ENCODE measurements at regions of chr18 and their contacts with region 1.

Region 1: DNA sequence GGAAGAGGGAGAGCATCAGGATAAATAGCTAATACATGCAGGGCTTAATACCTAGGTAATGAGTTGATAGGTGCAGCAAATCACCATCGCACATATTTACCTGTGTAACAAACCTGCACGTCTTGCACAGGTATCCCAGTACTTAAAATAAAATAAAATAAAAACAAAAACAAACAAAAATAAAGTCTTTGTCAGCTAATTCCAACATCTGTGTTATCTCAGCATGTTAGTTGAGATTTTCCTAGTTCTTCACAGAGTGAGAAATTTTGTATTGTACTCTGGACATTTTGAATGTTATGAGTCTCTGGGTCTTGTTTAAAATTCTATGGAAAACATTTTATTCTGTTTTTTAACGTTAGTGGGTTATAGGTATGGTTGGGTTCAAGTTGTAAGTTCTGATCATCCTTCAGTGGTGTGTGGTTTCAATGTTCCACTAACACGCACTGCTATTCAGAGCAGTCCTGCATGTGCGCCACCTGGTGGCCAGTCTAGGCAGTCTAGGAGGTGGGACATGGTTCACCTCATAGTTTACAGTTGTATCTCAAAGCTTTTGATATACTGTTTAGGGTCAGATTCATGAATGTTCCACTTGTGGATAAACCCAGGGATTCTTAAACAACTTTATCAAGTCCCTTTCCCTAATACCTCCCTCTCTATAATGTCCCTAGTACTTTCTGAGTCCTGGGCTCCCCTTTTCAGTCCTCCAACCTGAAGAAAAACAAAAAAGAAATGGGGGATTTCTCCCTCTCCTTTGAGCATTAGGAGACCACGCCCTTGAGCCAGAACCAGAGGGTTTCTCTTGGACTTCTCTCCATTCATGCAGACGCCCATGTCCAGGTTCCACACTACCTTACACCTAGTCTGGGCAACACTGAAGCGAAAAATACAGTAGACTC is 213.4 kb upstream of the GATA6 start:
- DNase-seq: peak; percentile 59
- H3K4me3 ChIP-seq: peak overlapping the region in 1 of 2 experiments; percentile 26; a peak in 1 of 4 replicates
- H3K27ac ChIP-seq: no peak overlapping the region
- H3K4me1 ChIP-seq: no peaks in the 10 kb centered on the region
- H3K27me3 ChIP-seq: peaks cover 41% of the 10 kb centered on the region
- CTCF ChIP-seq: peak; percentile 96
- EP300 ChIP-seq: no peak
- RAD21 ChIP-seq: peak; percentile 74

Region 2: DNA sequence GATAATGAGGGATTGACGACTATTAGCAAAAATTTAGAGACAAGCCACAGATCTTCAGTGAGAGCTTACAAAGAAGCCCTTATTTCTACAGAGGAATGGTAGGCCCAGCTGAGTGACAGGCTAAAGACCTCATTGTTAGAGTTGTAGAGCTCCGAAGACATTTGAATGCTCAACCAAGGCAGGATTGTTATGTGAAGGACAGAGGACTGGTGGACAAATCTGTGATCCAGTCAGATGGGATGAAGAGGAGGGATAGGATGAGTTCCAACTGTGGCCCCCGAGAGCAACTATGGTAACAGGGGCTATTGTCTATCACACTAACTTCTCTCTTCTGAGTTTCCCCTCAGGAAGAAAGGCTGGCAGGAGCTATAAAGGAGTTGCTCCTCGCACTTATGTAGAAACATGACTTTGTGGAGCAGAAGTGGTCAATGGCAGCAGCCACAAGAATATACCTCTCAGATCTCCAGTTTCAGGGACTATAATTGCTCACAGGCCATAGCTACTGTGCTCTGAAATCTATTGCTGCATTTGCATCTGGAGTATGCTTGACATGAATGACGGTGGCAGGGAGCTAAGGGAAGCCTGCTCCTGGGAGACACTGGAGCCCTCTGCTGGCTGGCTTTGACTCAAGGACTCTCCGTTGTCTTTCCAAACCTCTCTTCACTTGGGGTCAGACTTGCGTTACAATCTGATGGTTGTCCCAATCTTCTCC is 764.3 kb before region 1 on chr18:
- CTCF ChIA-PET with region 1: interaction called, 16 read pairs
- POLR2A ChIA-PET with region 1: no interaction called
- DNase-seq: peak; percentile 27
- H3K4me3 ChIP-seq: no peak overlapping the region; a peak in 1 of 4 replicates
- H3K27ac ChIP-seq: no peak overlapping the region
- H3K4me1 ChIP-seq: no peaks in the 10 kb centered on the region
- H3K27me3 ChIP-seq: peaks cover 17% of the 10 kb centered on the region; the same call in 1 of the 2 replicates
- CTCF ChIP-seq: peak; percentile 71
- EP300 ChIP-seq: no peak
- RAD21 ChIP-seq: peak; percentile 58

Region 3: DNA sequence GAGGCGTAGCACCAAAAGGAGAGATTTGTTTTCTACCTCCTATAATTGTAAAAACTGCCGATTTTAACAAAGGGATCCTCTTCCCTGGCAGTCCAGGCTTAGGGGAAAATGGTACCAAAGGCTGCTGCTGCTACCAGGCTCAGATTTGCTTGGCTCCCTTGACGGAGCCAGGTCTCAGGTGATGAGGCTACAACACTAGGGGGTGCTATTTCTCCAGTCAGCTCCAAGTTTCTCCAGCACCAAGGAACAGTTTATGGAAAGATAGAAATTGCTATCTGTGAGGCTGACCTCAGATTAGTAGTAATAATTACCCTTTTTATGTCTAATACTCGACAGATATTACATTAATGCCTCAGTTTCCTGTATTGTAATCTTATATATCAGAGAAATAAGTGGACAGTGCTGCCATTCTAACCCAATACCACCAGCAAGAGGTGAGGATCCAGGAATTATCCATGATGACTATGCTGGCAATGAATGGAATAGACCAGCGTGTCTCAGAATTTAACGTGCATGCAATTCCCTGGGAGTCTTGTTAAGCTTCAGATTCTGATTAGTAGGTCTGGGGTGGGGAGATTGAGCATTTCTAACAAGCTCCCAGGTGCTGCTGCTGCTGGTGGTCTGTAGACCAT is 466.8 kb before region 1 on chr18:
- CTCF ChIA-PET with region 1: interaction called, 12 read pairs
- POLR2A ChIA-PET with region 1: no interaction called
- DNase-seq: peak; percentile 71
- H3K4me3 ChIP-seq: peak overlapping the region in 1 of 2 experiments; percentile 49; a peak in 1 of 4 replicates
- H3K27ac ChIP-seq: no peak overlapping the region
- H3K4me1 ChIP-seq: peaks cover 3 to 9% of the 10 kb centered on the region in 2 experiments; a peak in 2 of 4 replicates
- H3K27me3 ChIP-seq: no peaks in the 10 kb centered on the region
- CTCF ChIP-seq: peak; percentile 73
- EP300 ChIP-seq: no peak
- RAD21 ChIP-seq: peak; percentile 83

Region 4: GRCh38 chr18:21897811-21898210 is 58.2 kb before region 1 on chr18:
- CTCF ChIA-PET with region 1: interaction called, 11 read pairs
- POLR2A ChIA-PET with region 1: no interaction called
- DNase-seq: peak; percentile 72
- H3K4me3 ChIP-seq: no peak overlapping the region
- H3K27ac ChIP-seq: no peak overlapping the region
- H3K4me1 ChIP-seq: no peaks in the 10 kb centered on the region
- H3K27me3 ChIP-seq: peaks cover 5% of the 10 kb centered on the region; the same call in 1 of the 2 replicates
- CTCF ChIP-seq: peak; percentile 72
- EP300 ChIP-seq: no peak
- RAD21 ChIP-seq: peak; percentile 79

Region 5: DNA sequence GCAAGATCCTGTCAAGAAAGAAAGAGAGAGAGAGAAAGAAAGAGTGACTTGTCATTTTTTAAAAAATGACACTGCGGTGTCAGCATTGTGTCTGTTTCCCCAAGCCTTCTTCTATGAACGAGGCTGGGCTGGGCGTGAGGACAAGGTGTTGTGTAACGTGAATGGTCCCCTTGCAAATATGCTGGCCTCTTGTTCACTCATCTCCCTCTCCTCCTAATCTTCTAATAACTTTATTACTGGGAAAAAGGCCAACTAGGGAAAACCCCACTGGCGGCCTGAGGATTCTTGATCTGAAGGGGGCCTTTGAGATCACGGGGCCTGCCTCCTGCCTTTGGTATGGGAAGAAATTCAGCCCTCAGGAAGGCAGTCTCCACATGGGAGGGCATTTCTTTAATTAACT is 52.3 kb before region 1 on chr18:
- CTCF ChIA-PET with region 1: interaction called, 12 read pairs
- POLR2A ChIA-PET with region 1: no interaction called
- DNase-seq: no peak
- H3K4me3 ChIP-seq: no peak overlapping the region
- H3K27ac ChIP-seq: no peak overlapping the region
- H3K4me1 ChIP-seq: peaks cover 0 to 4% of the 10 kb centered on the region in 2 experiments; a peak in 1 of 4 replicates
- H3K27me3 ChIP-seq: peaks cover 18% of the 10 kb centered on the region
- CTCF ChIP-seq: no peak
- EP300 ChIP-seq: no peak
- RAD21 ChIP-seq: no peak

Region 6: DNA sequence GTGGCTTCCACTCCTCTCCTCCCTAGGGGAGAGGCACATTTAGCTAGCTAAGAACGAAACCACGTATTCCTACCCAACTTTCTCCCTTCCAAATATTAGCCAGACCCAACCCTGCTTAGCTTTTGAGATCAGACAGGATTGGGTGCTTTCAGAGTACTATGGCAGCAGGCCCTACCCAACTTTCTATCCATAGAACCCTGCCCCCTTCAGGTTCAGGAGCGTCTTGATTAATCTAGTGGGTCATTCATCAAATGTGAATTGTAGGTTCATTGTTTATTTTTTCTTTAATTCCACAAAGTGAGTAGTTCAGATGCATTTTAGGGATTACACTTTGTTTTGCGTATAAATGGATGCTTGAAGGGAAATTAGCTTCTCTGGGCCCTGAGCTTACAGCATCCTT is 27.1 kb before region 1 on chr18:
- CTCF ChIA-PET with region 1: interaction called, 21 read pairs
- POLR2A ChIA-PET with region 1: no interaction called
- DNase-seq: no peak
- H3K4me3 ChIP-seq: no peak overlapping the region
- H3K27ac ChIP-seq: no peak overlapping the region
- H3K4me1 ChIP-seq: no peaks in the 10 kb centered on the region
- H3K27me3 ChIP-seq: peaks cover 48% of the 10 kb centered on the region; the same call in 1 of the 2 replicates
- CTCF ChIP-seq: no peak
- EP300 ChIP-seq: no peak
- RAD21 ChIP-seq: no peak

Region 7: GRCh38 chr18:21943456-21943855 is 12.5 kb before region 1 on chr18:
- CTCF ChIA-PET with region 1: interaction called, 15 read pairs
- POLR2A ChIA-PET with region 1: no interaction called
- DNase-seq: no peak
- H3K4me3 ChIP-seq: no peak overlapping the region
- H3K27ac ChIP-seq: no peak overlapping the region
- H3K4me1 ChIP-seq: no peaks in the 10 kb centered on the region
- H3K27me3 ChIP-seq: peaks cover 32% of the 10 kb centered on the region; the same call in 1 of the 2 replicates
- CTCF ChIP-seq: no peak
- EP300 ChIP-seq: no peak
- RAD21 ChIP-seq: no peak